ENCODE measurements at regions of chr2 and their contacts with region 1.

Region 1: GRCh38 chr2:133886735-133887660 is 318.7 kb upstream of the NCKAP5 start:
- DNase-seq: peak; percentile 63 to 80 (median 67)
- ATAC-seq: peak; percentile 29 to 86 (median 79)
- H3K4me3 ChIP-seq: no peak overlapping the region
- H3K27ac ChIP-seq: no peak overlapping the region
- H3K4me1 ChIP-seq: peaks cover 0 to 12% (median 2%) of the 10 kb centered on the region in 12 donors
- H3K27me3 ChIP-seq: peaks cover 0 to 3% (median 0%) of the 10 kb centered on the region in 9 donors
- CTCF ChIP-seq: peak; percentile 41 to 72 (median 58)
- POLR2A ChIP-seq: no peak

Region 2: GRCh38 chr2:134002391-134002790 is 115.4 kb after region 1 on chr2:
- intact Hi-C with region 1: loop called in 3 of 10 experiments (anchors 10 kb)
- DNase-seq: no peak
- ATAC-seq: no peak
- H3K4me3 ChIP-seq: no peak overlapping the region
- H3K27ac ChIP-seq: no peak overlapping the region
- H3K4me1 ChIP-seq: no peaks in the 10 kb centered on the region
- H3K27me3 ChIP-seq: no peaks in the 10 kb centered on the region
- CTCF ChIP-seq: no peak
- POLR2A ChIP-seq: no peak

Region 3: DNA sequence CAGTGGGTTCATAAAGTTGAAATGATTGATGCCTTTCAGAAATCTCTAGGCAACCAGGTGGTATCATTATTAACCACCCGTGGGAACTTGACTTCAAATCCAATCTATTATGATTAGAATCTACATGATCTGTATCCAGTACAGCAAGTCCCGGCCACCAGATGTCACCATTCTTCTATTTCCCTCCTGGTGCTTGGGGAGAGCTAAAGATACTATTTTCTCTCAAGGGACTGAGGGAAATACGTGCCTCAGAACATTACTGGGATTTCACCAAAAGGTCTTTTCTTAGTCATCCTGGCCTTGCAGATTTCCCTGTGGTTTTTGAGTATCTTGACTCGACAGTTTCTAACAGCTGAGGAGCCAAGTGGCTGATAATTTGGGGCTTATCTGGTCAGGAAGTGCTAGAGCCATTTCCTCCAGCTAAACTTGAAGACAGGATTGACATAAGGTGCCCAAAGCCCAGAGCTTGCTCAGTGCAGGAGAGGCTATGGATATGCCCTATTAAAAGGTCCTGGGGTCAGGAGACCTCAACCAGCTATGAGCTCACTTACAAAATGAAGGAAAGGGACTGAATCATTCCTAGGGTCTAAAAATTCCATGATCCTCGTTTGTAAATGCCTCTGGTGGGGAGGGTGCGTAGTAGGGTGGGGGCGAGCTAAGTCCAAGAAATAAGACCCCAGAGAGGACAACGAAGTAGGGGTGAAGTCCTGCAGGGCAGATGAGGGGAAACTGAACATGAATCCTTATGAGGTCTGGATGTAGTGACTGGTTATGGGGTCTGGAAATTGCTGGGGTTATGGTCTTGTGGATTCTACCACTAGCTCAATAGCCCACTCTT is 231.5 kb after region 1 on chr2:
- intact Hi-C with region 1: loop called in 7 of 10 experiments (anchors 5 to 10 kb)
- DNase-seq: peak; percentile 84 to 91 (median 86)
- ATAC-seq: peak; percentile 42 to 72 (median 53)
- H3K4me3 ChIP-seq: peak overlapping the region in 3 of 12 donors; percentile 5 to 99 (median 73)
- H3K27ac ChIP-seq: peak overlapping the region; percentile 33 to 96 (median 94)
- H3K4me1 ChIP-seq: peaks cover 10 to 43% (median 34%) of the 10 kb centered on the region in 12 donors
- H3K27me3 ChIP-seq: no peaks in the 10 kb centered on the region
- CTCF ChIP-seq: peak; percentile 67 to 94 (median 84)
- POLR2A ChIP-seq: no peak

Region 4: DNA sequence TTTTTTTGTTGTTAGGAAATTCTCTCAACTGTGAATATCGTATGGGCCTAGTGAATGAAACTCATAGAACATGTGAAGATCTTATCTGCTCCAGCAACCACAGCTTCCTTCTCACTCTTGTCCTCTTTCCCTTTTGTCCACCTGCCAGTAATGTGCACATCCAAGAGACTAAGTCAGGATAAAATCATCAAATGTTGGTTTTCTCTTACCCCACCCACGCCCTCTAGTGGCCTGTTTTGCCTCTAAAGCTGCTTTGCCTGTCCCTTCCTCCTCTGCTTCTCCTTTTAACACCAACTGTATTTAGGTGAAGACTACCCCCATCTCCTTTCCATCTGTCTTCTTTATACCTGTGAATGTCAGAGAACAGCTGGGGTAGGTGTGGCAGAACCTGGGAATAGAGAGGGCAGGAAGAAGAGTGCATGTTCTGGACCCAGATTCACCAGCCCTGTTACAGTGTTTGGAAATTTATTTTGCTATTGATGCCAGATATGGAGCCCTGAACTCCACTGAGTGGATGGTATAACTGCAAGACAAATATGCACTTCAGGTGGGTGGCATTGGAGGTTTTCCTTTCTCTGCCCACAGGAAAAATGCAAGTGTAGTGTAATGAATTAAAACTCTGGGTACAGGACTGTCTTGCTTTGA is 358.5 kb after region 1 on chr2:
- intact Hi-C with region 1: loop called in 7 of 10 experiments (anchors 5 to 10 kb)
- DNase-seq: peak; percentile 76 to 86 (median 78)
- ATAC-seq: peak; percentile 41 to 71 (median 64)
- H3K4me3 ChIP-seq: no peak overlapping the region
- H3K27ac ChIP-seq: peak overlapping the region in 2 of 12 donors; percentile 50 to 52
- H3K4me1 ChIP-seq: peaks cover 3 to 80% (median 53%) of the 10 kb centered on the region in 12 donors
- H3K27me3 ChIP-seq: no peaks in the 10 kb centered on the region
- CTCF ChIP-seq: peak; percentile 62 to 84 (median 76)
- POLR2A ChIP-seq: no peak

Region 5: GRCh38 chr2:134411828-134412638 is 525.0 kb after region 1 on chr2:
- intact Hi-C with region 1: loop called (anchors 2 to 10 kb)
- DNase-seq: peak in 4 of 5 donors; percentile 77 to 82 (median 78)
- ATAC-seq: peak; percentile 92 to 95 (median 94)
- H3K4me3 ChIP-seq: no peak overlapping the region
- H3K27ac ChIP-seq: peak overlapping the region in 9 of 12 donors; percentile 12 to 64 (median 42)
- H3K4me1 ChIP-seq: peaks cover 0 to 50% (median 38%) of the 10 kb centered on the region in 12 donors
- H3K27me3 ChIP-seq: no peaks in the 10 kb centered on the region
- CTCF ChIP-seq: peak; percentile 48 to 82 (median 71)
- POLR2A ChIP-seq: no peak

Region 6: DNA sequence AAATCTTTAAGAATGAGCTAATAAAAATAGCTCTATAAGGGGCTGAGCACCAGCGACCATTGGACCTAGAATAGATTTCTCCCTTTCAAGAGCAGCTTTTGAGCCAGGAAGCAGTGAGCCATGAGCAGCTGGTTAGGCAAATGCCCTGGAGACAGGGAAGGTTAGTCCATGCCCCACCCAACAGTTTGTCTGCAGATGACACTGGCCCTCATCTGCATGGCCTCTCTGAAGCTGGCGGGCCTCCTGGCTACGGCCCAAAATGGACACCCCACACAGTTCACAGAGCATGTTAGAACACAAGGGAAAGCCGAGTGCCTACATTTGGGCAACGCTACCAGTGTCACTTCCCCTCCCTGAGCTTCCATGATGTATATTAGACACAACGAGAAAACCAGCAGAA is 567.9 kb after region 1 on chr2:
- intact Hi-C with region 1: loop called in 5 of 10 experiments (anchors 2 to 10 kb)
- DNase-seq: peak in 2 of 5 donors; percentile 13 to 40
- ATAC-seq: no peak
- H3K4me3 ChIP-seq: no peak overlapping the region
- H3K27ac ChIP-seq: no peak overlapping the region
- H3K4me1 ChIP-seq: peaks cover 0 to 16% (median 0%) of the 10 kb centered on the region in 12 donors
- H3K27me3 ChIP-seq: no peaks in the 10 kb centered on the region
- CTCF ChIP-seq: no peak
- POLR2A ChIP-seq: no peak

Region 7: DNA sequence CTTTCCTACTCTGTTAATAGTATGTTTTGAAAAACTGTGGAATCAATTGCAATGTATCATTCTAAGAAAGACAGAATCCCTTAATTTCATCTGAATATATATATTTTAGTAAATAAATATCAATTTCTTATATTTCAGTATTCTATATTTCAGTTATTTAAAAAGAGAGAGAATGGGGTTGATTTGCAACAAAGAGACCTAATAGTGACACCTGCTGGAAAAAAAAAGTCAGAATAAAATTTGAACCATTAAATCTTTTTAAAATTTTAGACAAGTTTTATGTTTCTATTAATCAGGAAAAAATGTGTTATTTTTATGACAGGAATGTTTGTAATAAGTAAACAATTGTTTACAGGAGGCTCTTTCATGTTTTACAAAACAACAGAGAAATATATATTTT is 1010.9 kb after region 1 on chr2:
- intact Hi-C with region 1: loop called in 4 of 10 experiments (anchors 5 to 10 kb)
- DNase-seq: no peak
- ATAC-seq: no peak
- H3K4me3 ChIP-seq: no peak overlapping the region
- H3K27ac ChIP-seq: no peak overlapping the region
- H3K4me1 ChIP-seq: no peaks in the 10 kb centered on the region
- H3K27me3 ChIP-seq: no peaks in the 10 kb centered on the region
- CTCF ChIP-seq: peak; percentile 24 to 68 (median 50)
- POLR2A ChIP-seq: no peak